ENCODE measurements at regions of chr6 and their contacts with region 1.

Region 1: DNA sequence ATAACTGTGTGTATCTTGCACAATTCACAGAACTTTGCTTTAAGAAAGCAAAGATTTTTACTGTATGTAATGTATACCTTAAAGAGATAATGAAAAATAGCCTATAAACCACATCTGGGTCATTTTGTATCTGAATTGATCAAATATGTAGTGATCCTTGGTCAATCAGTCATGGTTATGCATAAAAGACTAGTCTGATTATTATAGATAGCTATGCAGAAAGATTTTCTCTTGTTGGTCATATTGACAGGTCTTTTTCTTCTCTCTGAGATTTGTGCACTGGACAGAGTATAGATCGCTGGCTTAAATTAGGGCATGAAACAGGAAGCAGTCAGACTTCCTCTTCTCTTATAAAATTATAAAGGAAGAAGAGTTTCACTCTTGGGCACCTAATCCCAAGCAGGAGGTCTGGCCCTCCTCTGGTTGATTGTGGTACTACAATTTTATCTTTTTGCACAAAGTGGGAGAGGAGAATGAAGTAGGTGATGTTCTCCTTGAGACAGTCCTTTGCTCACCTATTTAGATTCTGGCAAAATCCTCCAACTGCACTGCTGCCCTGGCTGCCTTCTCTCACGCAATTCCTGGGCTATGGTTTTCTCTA is 380.9 kb upstream of the RGS17 start:
- DNase-seq: peak; percentile 28
- H3K27ac ChIP-seq: no peak overlapping the region
- CTCF ChIP-seq: peak; percentile 73

Region 2: GRCh38 chr6:153231048-153231646 is 280.8 kb before region 1 on chr6:
- CTCF ChIA-PET with region 1: interaction called, 11 read pairs
- POLR2A ChIA-PET with region 1: no interaction called
- DNase-seq: peak; percentile 46
- H3K27ac ChIP-seq: no peak overlapping the region
- CTCF ChIP-seq: peak; percentile 97